Activated CD8-positive, alpha-beta T cell treated with anti-CD3 and anti-CD28 coated beads for 36 hours (primary cell): ENCODE measurements at regions of chr11 and their contacts with region 1.

Region 1: DNA sequence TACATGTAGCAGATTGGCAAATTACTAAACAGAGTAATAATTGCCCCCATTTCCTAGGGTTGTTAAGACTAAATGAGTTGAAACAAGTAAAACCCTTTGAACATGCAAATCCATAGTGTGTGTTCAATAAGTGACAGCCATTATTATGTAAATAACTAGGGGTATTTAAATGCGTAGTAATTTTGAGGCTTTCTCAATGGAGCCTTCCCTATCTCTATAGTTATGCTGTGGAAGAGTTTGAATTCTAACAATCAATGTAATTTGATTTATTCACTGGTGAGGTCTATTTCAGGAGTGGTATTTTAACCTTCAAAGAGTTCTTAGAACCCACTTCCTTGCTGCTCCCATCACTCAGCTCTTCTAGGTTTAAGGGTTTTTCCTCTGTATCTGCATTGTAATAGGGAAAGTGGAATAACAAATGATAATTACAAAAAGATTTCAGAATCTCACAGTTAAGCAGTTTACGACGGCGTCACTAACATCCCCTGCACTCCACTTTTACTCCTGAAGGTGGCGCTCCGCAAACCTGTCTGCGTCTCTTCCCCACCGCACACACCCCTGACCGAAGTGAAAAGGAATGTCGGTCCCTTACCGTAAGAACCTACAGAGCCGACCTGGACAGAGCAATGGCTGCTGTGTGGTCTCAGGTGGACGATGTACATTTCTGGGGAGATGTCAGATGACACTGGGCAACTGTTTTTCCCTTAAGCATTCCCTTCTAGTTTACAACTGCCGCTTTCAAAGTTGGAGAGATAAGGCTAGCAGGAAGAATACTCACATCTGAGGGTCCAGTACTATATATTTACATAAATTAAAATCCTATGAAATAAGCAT is 80.8 kb downstream of the ZC3H12C start:
- DNase-seq: peak; percentile 80
- ATAC-seq: peak; percentile 95
- H3K4me3 Mint-ChIP-seq: no peak overlapping the region
- H3K27ac Mint-ChIP-seq: no peak overlapping the region
- H3K4me1 Mint-ChIP-seq: peaks cover 5% of the 10 kb centered on the region
- H3K27me3 Mint-ChIP-seq: peaks cover 14% of the 10 kb centered on the region
- CTCF ChIP-seq: peak; percentile 97

Region 2: DNA sequence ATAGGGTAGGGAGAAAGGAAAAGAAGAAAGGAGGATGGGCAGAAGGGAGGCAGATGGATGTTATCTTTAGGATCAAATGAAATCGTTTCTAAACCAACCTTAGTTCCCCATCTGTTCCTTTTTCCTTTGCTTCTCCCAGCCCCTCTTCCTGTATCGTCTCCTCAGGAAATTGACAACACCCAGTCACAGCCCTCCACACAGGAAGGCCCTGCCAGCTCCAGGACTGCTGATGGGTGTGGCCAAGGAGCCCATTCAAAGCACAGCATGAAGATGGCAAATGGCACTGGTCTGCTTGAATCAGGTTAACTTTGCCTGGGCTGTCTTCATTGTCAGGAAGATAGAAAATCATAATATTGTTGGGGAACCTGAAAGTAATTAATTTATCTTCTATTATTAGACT is 587.2 kb before region 1 on chr11:
- CTCF ChIA-PET with region 1: no interaction called
- POLR2A ChIA-PET with region 1: no interaction called
- intact Hi-C with region 1: no loop called
- DNase-seq: no peak
- ATAC-seq: no peak
- H3K4me3 Mint-ChIP-seq: no peak overlapping the region
- H3K27ac Mint-ChIP-seq: no peak overlapping the region
- H3K4me1 Mint-ChIP-seq: no peaks in the 10 kb centered on the region
- H3K27me3 Mint-ChIP-seq: no peaks in the 10 kb centered on the region
- CTCF ChIP-seq: no peak

Region 3: DNA sequence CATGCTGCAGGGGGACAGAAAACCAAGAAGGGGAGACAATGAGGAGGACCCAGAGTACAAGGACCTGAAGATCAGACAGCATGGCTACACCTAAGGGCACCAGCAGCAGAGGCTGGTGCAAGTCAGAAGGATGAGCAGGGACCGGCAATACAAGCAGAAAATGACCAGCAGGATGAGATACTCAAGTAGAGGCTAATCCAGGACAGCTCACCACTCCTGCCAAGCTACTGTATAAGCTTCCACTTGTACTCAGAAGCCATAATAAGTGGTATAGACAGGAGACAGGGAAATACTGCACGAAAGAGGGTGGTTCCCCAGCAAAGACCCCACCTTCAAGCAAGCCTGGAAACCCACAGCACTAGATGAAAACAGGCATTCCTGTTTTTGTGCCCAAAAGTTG is 219.5 kb before region 1 on chr11:
- CTCF ChIA-PET with region 1: no interaction called
- POLR2A ChIA-PET with region 1: no interaction called
- intact Hi-C with region 1: loop called (anchors 5 kb)
- DNase-seq: no peak
- ATAC-seq: no peak
- H3K4me3 Mint-ChIP-seq: no peak overlapping the region
- H3K27ac Mint-ChIP-seq: no peak overlapping the region
- H3K4me1 Mint-ChIP-seq: no peaks in the 10 kb centered on the region
- H3K27me3 Mint-ChIP-seq: no peaks in the 10 kb centered on the region
- CTCF ChIP-seq: no peak

Region 4: GRCh38 chr11:110113505-110113904 is 60.5 kb before region 1 on chr11:
- CTCF ChIA-PET with region 1: no interaction called
- POLR2A ChIA-PET with region 1: no interaction called
- intact Hi-C with region 1: no loop called
- DNase-seq: no peak
- ATAC-seq: no peak
- H3K4me3 Mint-ChIP-seq: no peak overlapping the region
- H3K27ac Mint-ChIP-seq: no peak overlapping the region
- H3K4me1 Mint-ChIP-seq: no peaks in the 10 kb centered on the region
- H3K27me3 Mint-ChIP-seq: peaks cover 4% of the 10 kb centered on the region
- CTCF ChIP-seq: no peak